ENCODE measurements at regions of chr2 and their contacts with region 1.

Region 1: GRCh38 chr2:205925373-205926337 is 160.3 kb downstream of the INO80D start:
- DNase-seq: peak; percentile 86
- H3K4me3 Mint-ChIP-seq: peak overlapping the region; percentile 50
- H3K27ac Mint-ChIP-seq: no peak overlapping the region
- H3K4me1 Mint-ChIP-seq: peaks cover 27% of the 10 kb centered on the region
- H3K27me3 Mint-ChIP-seq: peaks cover 78% of the 10 kb centered on the region
- CTCF ChIP-seq: peak; percentile 92

Region 2: DNA sequence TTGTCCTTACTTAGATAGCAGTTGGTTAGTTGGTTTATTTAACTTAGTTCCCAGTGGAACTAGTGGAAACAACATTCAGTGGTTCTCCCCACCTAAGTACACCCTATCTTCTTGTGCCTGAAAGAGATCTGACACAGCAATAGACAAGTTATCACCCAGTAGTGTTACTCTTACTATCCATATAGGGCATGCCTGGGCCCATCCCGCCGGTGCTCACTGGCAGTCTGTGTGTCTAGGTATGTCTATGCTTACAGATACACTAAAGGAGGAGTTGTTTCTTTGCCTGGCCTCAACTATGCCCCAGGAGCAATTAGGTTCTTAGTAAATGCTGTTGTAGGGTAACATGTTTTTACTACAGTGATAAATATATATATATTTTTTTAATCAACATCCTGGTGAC is 255.4 kb before region 1 on chr2:
- CTCF ChIA-PET with region 1: no interaction called
- intact Hi-C with region 1: no loop called
- DNase-seq: no peak
- H3K4me3 Mint-ChIP-seq: no peak overlapping the region
- H3K27ac Mint-ChIP-seq: no peak overlapping the region
- H3K4me1 Mint-ChIP-seq: peaks cover 13% of the 10 kb centered on the region
- H3K27me3 Mint-ChIP-seq: no peaks in the 10 kb centered on the region
- CTCF ChIP-seq: no peak

Region 3: GRCh38 chr2:205685314-205686055 is 240.2 kb before region 1 on chr2:
- CTCF ChIA-PET with region 1: no interaction called
- intact Hi-C with region 1: loop called (anchors 2 kb)
- DNase-seq: peak; percentile 69
- H3K4me3 Mint-ChIP-seq: peak overlapping the region; percentile 93
- H3K27ac Mint-ChIP-seq: peak overlapping the region; percentile 74
- H3K4me1 Mint-ChIP-seq: peaks cover 19% of the 10 kb centered on the region
- H3K27me3 Mint-ChIP-seq: no peaks in the 10 kb centered on the region
- CTCF ChIP-seq: no peak

Region 4: GRCh38 chr2:205776139-205776538 is 149.5 kb before region 1 on chr2:
- CTCF ChIA-PET with region 1: interaction called, 3 read pairs
- intact Hi-C with region 1: loop called (anchors 2 kb)
- DNase-seq: peak; percentile 76
- H3K4me3 Mint-ChIP-seq: no peak overlapping the region
- H3K27ac Mint-ChIP-seq: no peak overlapping the region
- H3K4me1 Mint-ChIP-seq: peaks cover 5% of the 10 kb centered on the region
- H3K27me3 Mint-ChIP-seq: no peaks in the 10 kb centered on the region
- CTCF ChIP-seq: peak; percentile 67

Region 5: GRCh38 chr2:205903638-205904037 is 22.0 kb before region 1 on chr2:
- CTCF ChIA-PET with region 1: interaction called, 5 read pairs
- intact Hi-C with region 1: loop called (anchors 2 kb)
- DNase-seq: peak; percentile 56
- H3K4me3 Mint-ChIP-seq: no peak overlapping the region
- H3K27ac Mint-ChIP-seq: no peak overlapping the region
- H3K4me1 Mint-ChIP-seq: no peaks in the 10 kb centered on the region
- H3K27me3 Mint-ChIP-seq: peaks cover 24% of the 10 kb centered on the region
- CTCF ChIP-seq: peak; percentile 62

Measured in Calu3 (cell line).